Lower leg skin (tissue), 4 donors: ENCODE measurements at regions of chr20 and their contacts with region 1.

Region 1: GRCh38 chr20:11168026-11168425 is 494.2 kb upstream of the JAG1 start:
- DNase-seq: no peak
- H3K4me3 ChIP-seq: no peak overlapping the region
- CTCF ChIP-seq: no peak
- POLR2A ChIP-seq: no peak

Region 2: DNA sequence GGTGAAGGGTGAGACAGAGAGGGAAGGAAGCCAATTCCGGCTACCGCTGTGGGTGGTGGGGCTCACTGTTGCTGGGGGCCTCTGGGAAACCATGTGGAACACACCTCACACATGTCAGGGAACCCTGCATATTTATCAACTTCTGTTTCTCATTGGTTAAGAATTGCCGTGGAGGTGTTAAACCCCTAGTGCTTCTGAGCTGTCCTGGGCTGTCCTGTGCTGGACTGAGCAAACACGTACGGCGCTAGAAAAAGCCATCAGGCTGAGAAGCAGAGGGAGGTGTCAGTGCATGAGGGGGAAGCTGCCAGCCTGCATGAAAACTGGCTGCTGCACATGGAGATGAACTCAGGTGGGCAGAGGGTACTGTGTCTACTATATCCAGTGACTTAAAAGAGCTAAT is 390.3 kb before region 1 on chr20:
- intact Hi-C with region 1: loop called (anchors 5 kb)
- DNase-seq: no peak
- H3K4me3 ChIP-seq: no peak overlapping the region
- CTCF ChIP-seq: no peak
- POLR2A ChIP-seq: no peak

Region 3: GRCh38 chr20:11204926-11205768 is 37.1 kb after region 1 on chr20:
- intact Hi-C with region 1: no loop called
- DNase-seq: peak in 1 of 2 donors; percentile 67
- H3K4me3 ChIP-seq: no peak overlapping the region
- CTCF ChIP-seq: peak in 1 of 3 donors; percentile 56
- POLR2A ChIP-seq: no peak